Ascending aorta (tissue), 2 donors: ENCODE measurements at regions of chr3 and their contacts with region 1.

Region 1: GRCh38 chr3:50350527-50351322 is at the starts of genes CYB561D2 and NPRL2:
- DNase-seq: peak; percentile 89 to 98
- H3K4me3 ChIP-seq: peak within 1 kb of the TSS; percentile 63 to 76
- H3K27ac ChIP-seq: peak within 1 kb of the TSS; percentile 89 to 93
- H3K4me1 ChIP-seq: peaks cover 14 to 22% of the 10 kb centered on the region in 2 donors
- H3K27me3 ChIP-seq: no peaks in the 10 kb centered on the region
- CTCF ChIP-seq: no peak
- total RNA-seq, gene CYB561D2: 20.2 TPM
- total RNA-seq, gene NPRL2: 37.8 TPM

Region 2: DNA sequence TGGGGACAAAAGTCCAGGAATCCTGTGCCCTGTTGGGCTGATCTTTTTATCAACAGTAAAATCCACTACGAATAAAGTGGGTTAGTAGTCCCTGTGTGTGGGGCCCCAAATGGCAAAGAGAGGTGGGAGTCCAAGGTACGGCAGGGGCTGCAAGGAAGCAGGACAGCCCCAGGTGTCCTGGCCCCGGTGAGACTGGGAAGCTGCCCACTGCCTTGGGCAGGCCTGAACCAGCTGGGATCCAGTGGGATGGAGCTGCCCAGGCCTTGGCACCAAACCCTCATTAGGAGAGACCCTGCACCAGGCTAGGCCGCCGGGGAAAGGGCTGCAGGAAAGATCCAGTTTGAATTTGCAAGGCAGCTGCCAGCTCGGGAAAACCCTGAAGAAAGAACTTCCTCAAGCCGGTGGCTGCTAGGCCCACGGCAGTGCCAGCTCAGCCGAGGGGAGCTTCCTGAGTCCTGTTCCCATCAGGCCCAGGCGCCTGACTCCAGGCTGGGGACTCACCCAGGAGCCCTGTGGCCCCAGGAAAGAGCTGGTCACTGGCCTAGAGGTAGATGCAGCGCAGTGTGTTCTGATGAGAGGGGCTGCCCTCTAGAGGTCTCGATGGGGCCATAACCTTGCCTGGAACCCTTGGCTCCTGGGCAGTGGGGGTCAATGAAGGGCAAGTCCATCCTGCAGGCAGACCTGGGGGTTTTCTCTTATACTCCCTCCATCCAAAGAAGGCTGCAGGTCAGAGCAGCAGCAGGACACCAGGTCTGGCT is 129.1 kb before region 1 on chr3:
- intact Hi-C with region 1: no loop called
- DNase-seq: no peak
- H3K4me3 ChIP-seq: no peak overlapping the region
- H3K27ac ChIP-seq: no peak overlapping the region
- H3K4me1 ChIP-seq: peaks cover 0 to 5% of the 10 kb centered on the region in 2 donors
- H3K27me3 ChIP-seq: no peaks in the 10 kb centered on the region
- CTCF ChIP-seq: no peak

Region 3: GRCh38 chr3:50542177-50543034 is 191.7 kb after region 1 on chr3:
- intact Hi-C with region 1: loop called (anchors 1 kb)
- DNase-seq: peak in 1 of 2 donors; percentile 76
- H3K4me3 ChIP-seq: no peak overlapping the region
- H3K27ac ChIP-seq: no peak overlapping the region
- H3K4me1 ChIP-seq: no peaks in the 10 kb centered on the region
- H3K27me3 ChIP-seq: no peaks in the 10 kb centered on the region
- CTCF ChIP-seq: peak; percentile 79 to 87 (median 84)

Region 4: GRCh38 chr3:50600841-50601591 is 250.3 kb after region 1 on chr3:
- intact Hi-C with region 1: loop called (anchors 5 kb)
- DNase-seq: peak; percentile 88 to 98
- H3K4me3 ChIP-seq: peak overlapping the region; percentile 21 to 46
- H3K27ac ChIP-seq: peak overlapping the region; percentile 94 to 98
- H3K4me1 ChIP-seq: peaks cover 20 to 29% of the 10 kb centered on the region in 2 donors
- H3K27me3 ChIP-seq: no peaks in the 10 kb centered on the region
- CTCF ChIP-seq: no peak